Activated naive CD4-positive, alpha-beta T cell treated with anti-CD3 and anti-CD28 coated beads for 36 hours (primary cell): ENCODE measurements at regions of chr19 and their contacts with region 1.

Region 1: DNA sequence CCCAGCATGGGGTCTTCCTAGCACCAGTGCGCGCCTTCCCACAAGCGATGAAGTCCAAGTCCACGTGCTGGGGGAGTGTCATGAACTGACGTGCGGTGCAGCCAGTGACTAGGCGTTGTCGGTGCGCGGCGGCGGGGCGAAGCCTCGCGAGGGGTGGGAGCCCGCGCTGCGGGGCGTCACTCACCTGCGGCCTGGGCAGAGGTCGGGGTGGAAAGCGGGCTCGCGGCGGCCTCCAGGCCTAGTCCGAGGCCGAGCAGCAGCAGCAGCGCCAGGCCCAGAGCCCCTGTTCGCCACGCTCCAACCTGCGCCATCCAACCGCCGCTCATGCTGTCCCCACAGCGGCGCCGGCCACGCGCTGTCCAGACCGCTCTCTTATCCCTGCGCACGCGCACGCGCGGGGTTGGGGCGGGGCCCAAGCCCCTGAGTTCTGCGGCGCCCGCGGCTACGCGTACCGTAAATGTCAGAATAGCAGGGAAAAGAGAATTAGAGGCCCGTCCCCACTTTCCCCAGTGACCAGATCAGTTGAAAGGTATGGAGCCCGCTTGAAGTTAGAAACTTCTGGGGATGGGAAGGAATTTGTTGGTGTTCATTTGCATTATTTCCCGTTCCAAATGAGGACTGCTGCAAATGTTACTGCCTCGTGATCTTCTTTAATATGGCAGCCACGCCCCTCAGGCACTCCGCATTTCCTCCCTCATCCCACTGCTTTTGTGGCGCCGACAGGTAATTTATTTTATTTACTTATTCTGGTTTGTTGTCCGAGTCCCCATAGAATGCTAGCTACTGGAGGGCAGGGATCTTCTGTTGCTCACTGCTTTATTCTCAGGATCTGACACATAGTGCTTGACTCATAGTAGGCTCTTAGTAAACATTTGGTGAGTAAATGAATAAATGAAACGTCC is at the start of gene CD320:
- DNase-seq: peak; percentile 86
- H3K4me3 Mint-ChIP-seq: peak within 1 kb of the TSS; percentile 94
- H3K27ac Mint-ChIP-seq: peak within 1 kb of the TSS; percentile 90
- H3K4me1 Mint-ChIP-seq: peaks cover 39% of the 10 kb centered on the region
- H3K27me3 Mint-ChIP-seq: no peaks in the 10 kb centered on the region
- total RNA-seq, gene CD320: 37.6 to 40.1 TPM

Region 2: DNA sequence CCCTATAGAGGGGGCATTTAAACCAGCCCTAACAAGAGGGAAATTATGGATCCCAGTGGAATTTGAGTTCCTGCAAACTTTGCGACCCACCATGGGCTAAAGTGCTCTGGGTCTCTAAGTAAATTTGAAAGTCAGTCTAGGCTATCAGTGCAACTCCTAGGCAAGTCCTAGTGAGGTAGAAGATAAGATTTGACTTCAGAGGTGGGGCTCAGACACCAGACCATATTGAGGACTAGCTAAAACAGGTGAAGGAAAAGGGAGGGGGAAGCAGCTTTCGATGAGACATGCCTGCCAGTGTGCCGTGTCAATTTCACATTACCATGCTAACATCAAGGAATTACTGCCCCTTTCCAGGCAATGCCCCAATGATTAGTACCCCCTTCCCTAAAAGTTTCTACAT is 38.5 kb before region 1 on chr19:
- CTCF ChIA-PET with region 1: interaction called, 5 read pairs
- intact Hi-C with region 1: loop called (anchors 5 kb)
- DNase-seq: no peak
- H3K4me3 Mint-ChIP-seq: peak overlapping the region; percentile 78
- H3K27ac Mint-ChIP-seq: peak overlapping the region; percentile 84
- H3K4me1 Mint-ChIP-seq: peaks cover 12% of the 10 kb centered on the region
- H3K27me3 Mint-ChIP-seq: no peaks in the 10 kb centered on the region